CD8-positive, alpha-beta T cell (primary cell): ENCODE measurements at regions of chr15 and their contacts with region 1.

Region 1: GRCh38 chr15:64093627-64094417 is at the start of gene CIAO2A:
- DNase-seq: peak; percentile 79 to 97 (median 91)
- ATAC-seq: peak; percentile 72
- H3K4me3 ChIP-seq: peak within 1 kb of the TSS; percentile 73 to 76
- H3K4me3 Mint-ChIP-seq: peak within 1 kb of the TSS; percentile 94
- H3K27ac ChIP-seq: peak within 1 kb of the TSS; percentile 82 to 91
- H3K27ac Mint-ChIP-seq: peak within 1 kb of the TSS; percentile 97
- H3K4me1 ChIP-seq: peaks cover 47% of the 10 kb centered on the region
- H3K4me1 Mint-ChIP-seq: peaks cover 74% of the 10 kb centered on the region
- H3K27me3 ChIP-seq: no peaks in the 10 kb centered on the region
- H3K27me3 Mint-ChIP-seq: no peaks in the 10 kb centered on the region
- CTCF ChIP-seq: no peak
- total RNA-seq, gene CIAO2A: 12.4 to 12.7 TPM

Region 2: GRCh38 chr15:63048115-63048775 is 1045.6 kb before region 1 on chr15:
- CTCF ChIA-PET with region 1: no interaction called
- POLR2A ChIA-PET with region 1: no interaction called
- intact Hi-C with region 1: loop called in 1 of 2 experiments (anchors 2 kb)
- DNase-seq: peak; percentile 65 to 92 (median 85)
- ATAC-seq: peak; percentile 77
- H3K4me3 ChIP-seq: peak overlapping the region; percentile 62 to 72
- H3K4me3 Mint-ChIP-seq: peak overlapping the region; percentile 88
- H3K27ac ChIP-seq: peak overlapping the region in 1 of 2 experiments; percentile 47
- H3K27ac Mint-ChIP-seq: peak overlapping the region; percentile 74
- H3K4me1 ChIP-seq: peaks cover 21% of the 10 kb centered on the region
- H3K4me1 Mint-ChIP-seq: peaks cover 21% of the 10 kb centered on the region
- H3K27me3 ChIP-seq: peaks cover 14 to 25% of the 10 kb centered on the region in 2 experiments
- H3K27me3 Mint-ChIP-seq: peaks cover 32% of the 10 kb centered on the region
- CTCF ChIP-seq: peak; percentile 80

Region 3: GRCh38 chr15:63288778-63289378 is 804.9 kb before region 1 on chr15:
- CTCF ChIA-PET with region 1: no interaction called
- POLR2A ChIA-PET with region 1: no interaction called
- intact Hi-C with region 1: loop called in 1 of 2 experiments (anchors 10 kb)
- DNase-seq: peak in 2 of 9 experiments; percentile 57 to 72
- ATAC-seq: peak; percentile 75
- H3K4me3 ChIP-seq: no peak overlapping the region
- H3K4me3 Mint-ChIP-seq: no peak overlapping the region
- H3K27ac ChIP-seq: peak overlapping the region in 1 of 2 experiments; percentile 0
- H3K27ac Mint-ChIP-seq: no peak overlapping the region
- H3K4me1 ChIP-seq: peaks cover 7% of the 10 kb centered on the region
- H3K4me1 Mint-ChIP-seq: peaks cover 7% of the 10 kb centered on the region
- H3K27me3 ChIP-seq: no peaks in the 10 kb centered on the region
- H3K27me3 Mint-ChIP-seq: no peaks in the 10 kb centered on the region
- CTCF ChIP-seq: peak; percentile 81

Region 4: GRCh38 chr15:63833021-63833696 is 260.7 kb before region 1 on chr15:
- CTCF ChIA-PET with region 1: no interaction called
- POLR2A ChIA-PET with region 1: no interaction called
- intact Hi-C with region 1: loop called (anchors 1 to 2 kb)
- DNase-seq: peak in 7 of 9 experiments; percentile 10 to 59 (median 28)
- ATAC-seq: peak; percentile 34
- H3K4me3 ChIP-seq: peak overlapping the region; percentile 93 to 99
- H3K4me3 Mint-ChIP-seq: peak overlapping the region; percentile 98
- H3K27ac ChIP-seq: peak overlapping the region; percentile 92 to 98
- H3K27ac Mint-ChIP-seq: peak overlapping the region; percentile 94
- H3K4me1 ChIP-seq: peaks cover 40% of the 10 kb centered on the region
- H3K4me1 Mint-ChIP-seq: peaks cover 56% of the 10 kb centered on the region
- H3K27me3 ChIP-seq: no peaks in the 10 kb centered on the region
- H3K27me3 Mint-ChIP-seq: no peaks in the 10 kb centered on the region
- CTCF ChIP-seq: no peak

Region 5: GRCh38 chr15:64162870-64163658 is 69.2 kb after region 1 on chr15 and contains the start of gene PPIB:
- CTCF ChIA-PET with region 1: no interaction called
- POLR2A ChIA-PET with region 1: interaction called, 15 read pairs
- intact Hi-C with region 1: loop called (anchors 1 kb)
- DNase-seq: peak; percentile 93 to 98 (median 96)
- ATAC-seq: peak; percentile 93
- H3K4me3 ChIP-seq: peak within 1 kb of the TSS; percentile 88 to 92
- H3K4me3 Mint-ChIP-seq: peak within 1 kb of the TSS; percentile 90
- H3K27ac ChIP-seq: peak within 1 kb of the TSS; percentile 79 to 88
- H3K27ac Mint-ChIP-seq: peak within 1 kb of the TSS; percentile 87
- H3K4me1 ChIP-seq: peaks cover 38% of the 10 kb centered on the region
- H3K4me1 Mint-ChIP-seq: peaks cover 41% of the 10 kb centered on the region
- H3K27me3 ChIP-seq: no peaks in the 10 kb centered on the region
- H3K27me3 Mint-ChIP-seq: no peaks in the 10 kb centered on the region
- CTCF ChIP-seq: no peak
- total RNA-seq, gene PPIB: 148 to 156 TPM

Region 6: DNA sequence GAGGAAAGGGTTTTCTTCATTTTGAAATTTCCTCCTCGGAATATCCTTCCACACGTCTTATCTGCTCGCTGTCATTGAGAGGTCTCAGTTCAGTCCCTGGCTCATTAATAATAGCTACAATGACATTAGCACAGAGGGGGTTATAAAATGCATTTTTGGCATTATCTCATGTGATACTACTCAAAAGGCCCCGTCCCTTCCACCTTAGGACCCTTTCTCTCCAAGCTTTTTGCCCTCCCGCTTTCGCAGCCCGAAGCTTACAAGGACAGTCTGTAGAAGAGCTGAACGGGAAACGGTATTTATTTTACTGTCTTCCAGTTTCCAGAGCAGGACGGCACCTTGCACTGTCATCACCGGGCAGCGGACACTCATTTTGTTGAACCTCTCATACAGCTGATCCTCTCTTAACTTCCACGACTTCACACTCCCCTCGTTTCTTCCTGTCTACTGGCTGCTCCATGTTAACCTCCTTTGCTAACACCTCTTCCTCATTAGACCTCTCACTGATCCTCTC is 742.3 kb after region 1 on chr15:
- CTCF ChIA-PET with region 1: no interaction called
- POLR2A ChIA-PET with region 1: no interaction called
- intact Hi-C with region 1: loop called in 1 of 2 experiments (anchors 5 kb)
- DNase-seq: no peak
- ATAC-seq: no peak
- H3K4me3 ChIP-seq: no peak overlapping the region
- H3K4me3 Mint-ChIP-seq: no peak overlapping the region
- H3K27ac ChIP-seq: no peak overlapping the region
- H3K27ac Mint-ChIP-seq: peak overlapping the region; percentile 43
- H3K4me1 ChIP-seq: peaks cover 53% of the 10 kb centered on the region
- H3K4me1 Mint-ChIP-seq: peaks cover 49% of the 10 kb centered on the region
- H3K27me3 ChIP-seq: no peaks in the 10 kb centered on the region
- H3K27me3 Mint-ChIP-seq: no peaks in the 10 kb centered on the region
- CTCF ChIP-seq: no peak

Region 7: GRCh38 chr15:65869127-65869953 is 1775.5 kb after region 1 on chr15 and contains the start of gene RAB11A:
- CTCF ChIA-PET with region 1: no interaction called
- POLR2A ChIA-PET with region 1: no interaction called
- intact Hi-C with region 1: loop called in 1 of 2 experiments (anchors 10 kb)
- DNase-seq: peak; percentile 86 to 98 (median 94)
- ATAC-seq: peak; percentile 88
- H3K4me3 ChIP-seq: peak within 1 kb of the TSS; percentile 84 to 98
- H3K4me3 Mint-ChIP-seq: peak within 1 kb of the TSS; percentile 99
- H3K27ac ChIP-seq: peak within 1 kb of the TSS; percentile 90 to 94
- H3K27ac Mint-ChIP-seq: peak within 1 kb of the TSS; percentile 94
- H3K4me1 ChIP-seq: peaks cover 24% of the 10 kb centered on the region
- H3K4me1 Mint-ChIP-seq: peaks cover 31% of the 10 kb centered on the region
- H3K27me3 ChIP-seq: no peaks in the 10 kb centered on the region
- H3K27me3 Mint-ChIP-seq: no peaks in the 10 kb centered on the region
- CTCF ChIP-seq: peak; percentile 42
- total RNA-seq, gene RAB11A: 85.9 to 88.3 TPM